CD8-positive, alpha-beta T cell (primary cell): ENCODE measurements at regions of chr1 and their contacts with region 1.

Region 1: DNA sequence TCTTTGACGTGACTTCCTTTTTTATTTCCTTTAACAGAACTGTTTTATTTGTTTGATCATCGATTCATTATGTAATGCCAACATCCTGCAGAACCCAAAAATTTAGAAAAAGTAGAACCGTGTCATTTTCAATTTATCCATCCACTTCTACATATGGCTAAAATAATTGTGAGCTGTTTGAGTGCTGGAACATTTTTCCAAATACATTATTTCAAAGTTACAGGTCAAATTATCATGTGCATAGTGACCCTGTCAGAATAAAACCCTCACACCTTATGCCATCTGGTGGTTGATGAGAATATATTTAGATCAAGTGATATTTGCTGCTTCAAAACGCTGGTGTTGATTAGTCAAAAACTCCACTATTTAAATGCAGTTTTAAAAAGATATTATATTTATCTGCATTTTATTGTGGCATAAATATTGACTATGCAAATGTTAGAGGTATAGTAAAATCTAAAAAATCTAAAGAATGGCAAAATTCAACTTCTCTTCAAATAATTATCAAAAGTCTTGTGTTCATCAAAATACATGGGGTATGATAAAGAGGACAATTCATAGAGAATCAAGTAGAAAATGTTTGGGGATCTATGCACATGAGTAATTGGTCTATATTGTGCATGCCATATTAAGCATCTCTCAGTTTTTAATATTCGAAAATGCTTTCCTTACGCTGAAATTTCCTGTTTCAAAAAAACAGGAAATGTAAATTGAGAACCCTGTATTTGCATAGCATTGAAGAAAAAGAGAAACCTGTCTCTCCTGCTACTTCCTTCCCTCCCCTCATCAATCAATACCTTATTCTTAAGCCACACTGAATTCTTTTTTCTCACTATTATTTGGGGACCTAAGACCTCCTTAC is 39.7 kb downstream of the UBE2U start:
- DNase-seq: peak in 2 of 9 experiments; percentile 16 to 40
- ATAC-seq: no peak
- H3K4me3 ChIP-seq: no peak overlapping the region
- H3K4me3 Mint-ChIP-seq: peak overlapping the region; percentile 68
- H3K27ac ChIP-seq: no peak overlapping the region
- H3K27ac Mint-ChIP-seq: peak overlapping the region; percentile 47
- H3K4me1 ChIP-seq: peaks cover 13% of the 10 kb centered on the region
- H3K4me1 Mint-ChIP-seq: peaks cover 21% of the 10 kb centered on the region
- H3K27me3 ChIP-seq: peaks cover 0 to 4% of the 10 kb centered on the region in 2 experiments
- H3K27me3 Mint-ChIP-seq: peaks cover 12% of the 10 kb centered on the region
- CTCF ChIP-seq: peak; percentile 55

Region 2: DNA sequence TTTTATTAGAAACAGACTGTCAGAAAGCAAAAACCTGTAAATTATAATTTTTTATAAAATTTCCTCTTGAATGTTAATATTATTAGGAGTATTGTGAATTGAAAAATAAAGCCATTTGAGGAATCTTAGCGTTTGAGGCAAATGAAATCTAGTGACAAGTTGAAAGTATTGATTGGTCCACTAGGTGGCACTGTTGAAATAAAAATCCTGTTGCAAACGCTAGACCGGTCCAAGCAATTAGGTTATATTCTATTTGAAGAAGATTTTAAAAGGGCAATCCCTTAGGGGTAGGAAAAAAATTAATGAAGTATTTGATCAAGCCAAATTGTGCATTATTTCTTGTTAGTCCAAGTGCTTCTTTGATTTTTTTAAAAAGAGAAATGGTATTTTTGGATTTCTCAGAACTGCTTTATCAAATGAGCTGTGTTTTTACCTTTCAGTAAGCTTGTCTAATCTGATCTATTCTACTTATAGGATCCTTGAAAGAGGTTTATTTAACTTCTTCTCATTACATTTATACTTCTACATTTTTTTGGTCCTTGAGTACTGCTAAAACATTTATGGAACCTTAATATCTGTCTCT is 1401.4 kb before region 1 on chr1:
- CTCF ChIA-PET with region 1: no interaction called
- POLR2A ChIA-PET with region 1: no interaction called
- intact Hi-C with region 1: loop called (anchors 2 to 5 kb)
- DNase-seq: peak in 3 of 9 experiments; percentile 27 to 69 (median 62)
- ATAC-seq: no peak
- H3K4me3 ChIP-seq: no peak overlapping the region
- H3K4me3 Mint-ChIP-seq: no peak overlapping the region
- H3K27ac ChIP-seq: no peak overlapping the region
- H3K27ac Mint-ChIP-seq: no peak overlapping the region
- H3K4me1 ChIP-seq: peaks cover 3% of the 10 kb centered on the region
- H3K4me1 Mint-ChIP-seq: peaks cover 2% of the 10 kb centered on the region
- H3K27me3 ChIP-seq: no peaks in the 10 kb centered on the region
- H3K27me3 Mint-ChIP-seq: no peaks in the 10 kb centered on the region
- CTCF ChIP-seq: peak; percentile 92

Region 3: DNA sequence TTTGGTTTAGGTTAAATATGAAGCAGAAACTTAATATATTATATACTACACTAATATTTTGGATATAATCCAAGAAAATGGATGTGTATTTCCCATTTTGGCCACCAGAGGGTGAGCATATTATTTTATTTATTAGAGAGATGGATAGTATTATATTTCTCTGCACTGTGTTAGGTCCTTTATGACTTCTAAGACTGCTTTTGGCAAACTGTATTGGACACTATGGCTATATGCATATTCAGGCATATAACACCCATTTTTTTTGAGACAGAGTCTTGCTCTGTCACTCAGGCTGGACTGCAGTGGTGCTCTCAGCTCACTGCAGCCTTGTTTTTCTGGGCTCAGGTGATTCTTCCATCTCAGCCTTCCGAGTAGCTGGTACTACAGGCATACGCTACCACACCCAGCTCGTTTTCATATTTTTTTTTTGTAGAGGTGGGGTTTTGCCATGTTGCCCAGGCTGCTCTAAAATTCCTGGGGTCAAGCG is 667.7 kb before region 1 on chr1:
- CTCF ChIA-PET with region 1: interaction called, 12 read pairs
- POLR2A ChIA-PET with region 1: no interaction called
- intact Hi-C with region 1: no loop called
- DNase-seq: peak in 3 of 9 experiments; percentile 11 to 42 (median 37)
- ATAC-seq: peak; percentile 38
- H3K4me3 ChIP-seq: no peak overlapping the region
- H3K4me3 Mint-ChIP-seq: no peak overlapping the region
- H3K27ac ChIP-seq: no peak overlapping the region
- H3K27ac Mint-ChIP-seq: no peak overlapping the region
- H3K4me1 ChIP-seq: no peaks in the 10 kb centered on the region
- H3K4me1 Mint-ChIP-seq: no peaks in the 10 kb centered on the region
- H3K27me3 ChIP-seq: no peaks in the 10 kb centered on the region
- H3K27me3 Mint-ChIP-seq: no peaks in the 10 kb centered on the region
- CTCF ChIP-seq: peak; percentile 97

Region 4: GRCh38 chr1:63691701-63692425 is 551.3 kb before region 1 on chr1:
- CTCF ChIA-PET with region 1: interaction called, 8 read pairs
- POLR2A ChIA-PET with region 1: no interaction called
- intact Hi-C with region 1: loop called (anchors 5 kb)
- DNase-seq: peak in 4 of 9 experiments; percentile 1 to 42 (median 21)
- ATAC-seq: no peak
- H3K4me3 ChIP-seq: no peak overlapping the region
- H3K4me3 Mint-ChIP-seq: no peak overlapping the region
- H3K27ac ChIP-seq: no peak overlapping the region
- H3K27ac Mint-ChIP-seq: no peak overlapping the region
- H3K4me1 ChIP-seq: no peaks in the 10 kb centered on the region
- H3K4me1 Mint-ChIP-seq: peaks cover 2% of the 10 kb centered on the region
- H3K27me3 ChIP-seq: no peaks in the 10 kb centered on the region
- H3K27me3 Mint-ChIP-seq: peaks cover 1% of the 10 kb centered on the region
- CTCF ChIP-seq: peak; percentile 45

Region 5: GRCh38 chr1:64136752-64137411 is 106.2 kb before region 1 on chr1:
- CTCF ChIA-PET with region 1: interaction called, 5 read pairs
- POLR2A ChIA-PET with region 1: no interaction called
- intact Hi-C with region 1: loop called in 1 of 2 experiments (anchors 5 kb)
- DNase-seq: peak; percentile 26 to 72 (median 60)
- ATAC-seq: peak; percentile 63
- H3K4me3 ChIP-seq: no peak overlapping the region
- H3K4me3 Mint-ChIP-seq: no peak overlapping the region
- H3K27ac ChIP-seq: no peak overlapping the region
- H3K27ac Mint-ChIP-seq: no peak overlapping the region
- H3K4me1 ChIP-seq: no peaks in the 10 kb centered on the region
- H3K4me1 Mint-ChIP-seq: no peaks in the 10 kb centered on the region
- H3K27me3 ChIP-seq: no peaks in the 10 kb centered on the region
- H3K27me3 Mint-ChIP-seq: peaks cover 5% of the 10 kb centered on the region
- CTCF ChIP-seq: peak; percentile 71

Region 6: DNA sequence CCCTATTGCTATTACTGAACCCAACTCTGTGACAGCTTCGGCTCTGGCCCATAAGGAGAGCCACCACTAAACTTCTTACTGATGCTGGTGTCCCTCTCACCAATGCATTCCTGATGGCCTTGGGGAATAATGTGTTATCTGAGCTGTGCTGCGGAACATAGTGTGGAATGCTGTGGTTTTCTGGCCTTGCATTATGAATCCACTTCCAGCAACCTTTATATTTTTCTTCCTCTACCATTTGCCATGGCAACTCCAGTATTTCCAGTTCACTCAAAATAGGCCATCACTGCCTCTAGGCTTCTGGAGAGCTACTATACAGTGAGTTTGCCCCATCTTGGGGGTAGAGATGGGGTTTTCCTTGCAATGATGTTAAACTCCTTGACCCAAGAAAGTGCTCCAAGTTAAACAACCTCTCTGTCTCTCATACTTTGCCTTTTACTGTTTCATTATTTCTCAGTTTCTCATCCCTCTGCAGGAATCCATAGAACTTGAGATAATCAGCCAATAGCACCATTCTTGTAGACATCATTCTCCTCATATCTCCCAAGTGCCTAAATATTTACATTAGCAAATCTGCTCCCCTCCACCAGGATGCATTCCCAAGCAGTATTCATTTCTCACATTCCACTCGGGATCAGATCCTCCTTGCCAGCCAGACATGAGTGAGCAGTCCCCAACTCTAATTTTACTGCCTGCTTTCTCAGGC is 490.6 kb after region 1 on chr1:
- CTCF ChIA-PET with region 1: no interaction called
- POLR2A ChIA-PET with region 1: no interaction called
- intact Hi-C with region 1: no loop called
- DNase-seq: no peak
- ATAC-seq: no peak
- H3K4me3 ChIP-seq: no peak overlapping the region
- H3K4me3 Mint-ChIP-seq: no peak overlapping the region
- H3K27ac ChIP-seq: no peak overlapping the region
- H3K27ac Mint-ChIP-seq: no peak overlapping the region
- H3K4me1 ChIP-seq: no peaks in the 10 kb centered on the region
- H3K4me1 Mint-ChIP-seq: no peaks in the 10 kb centered on the region
- H3K27me3 ChIP-seq: no peaks in the 10 kb centered on the region
- H3K27me3 Mint-ChIP-seq: peaks cover 7% of the 10 kb centered on the region
- CTCF ChIP-seq: no peak

Region 7: DNA sequence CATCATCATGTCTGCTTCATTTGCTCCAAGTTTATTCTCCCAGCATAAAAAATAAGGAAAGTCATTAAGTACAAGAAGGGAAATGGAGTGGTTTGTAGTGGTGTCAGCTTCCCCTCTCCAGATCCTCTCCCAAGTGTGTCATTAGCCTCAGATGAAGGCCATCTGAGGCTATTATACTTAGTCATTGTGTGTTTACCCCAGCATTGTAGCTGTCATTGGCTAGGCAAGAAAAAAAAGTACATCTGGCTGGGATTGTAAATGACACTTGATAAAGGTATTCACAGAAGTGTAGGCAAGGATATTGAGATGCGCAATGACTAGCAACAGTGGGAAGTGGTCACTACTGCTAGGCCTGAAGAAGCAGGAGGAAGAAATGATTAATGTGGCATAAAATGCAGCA is 1973.9 kb after region 1 on chr1:
- CTCF ChIA-PET with region 1: no interaction called
- POLR2A ChIA-PET with region 1: no interaction called
- intact Hi-C with region 1: no loop called
- DNase-seq: no peak
- ATAC-seq: no peak
- H3K4me3 ChIP-seq: no peak overlapping the region
- H3K4me3 Mint-ChIP-seq: no peak overlapping the region
- H3K27ac ChIP-seq: no peak overlapping the region
- H3K27ac Mint-ChIP-seq: no peak overlapping the region
- H3K4me1 ChIP-seq: peaks cover 7% of the 10 kb centered on the region
- H3K4me1 Mint-ChIP-seq: peaks cover 13% of the 10 kb centered on the region
- H3K27me3 ChIP-seq: no peaks in the 10 kb centered on the region
- H3K27me3 Mint-ChIP-seq: no peaks in the 10 kb centered on the region
- CTCF ChIP-seq: no peak